ENCODE measurements at regions of chr13 and their contacts with region 1.

Region 1: GRCh38 chr13:99442273-99442895 is 58.9 kb upstream of the TM9SF2 start:
- DNase-seq: peak in 3 of 5 donors; percentile 37 to 63 (median 48)
- H3K4me3 ChIP-seq: no peak overlapping the region
- H3K27ac ChIP-seq: no peak overlapping the region
- H3K4me1 ChIP-seq: no peaks in the 10 kb centered on the region
- H3K27me3 ChIP-seq: no peaks in the 10 kb centered on the region
- CTCF ChIP-seq: peak; percentile 93

Region 2: GRCh38 chr13:99516153-99516929 is 74.0 kb after region 1 on chr13:
- intact Hi-C with region 1: loop called (anchors 10 kb)
- DNase-seq: no peak
- H3K4me3 ChIP-seq: no peak overlapping the region
- H3K27ac ChIP-seq: no peak overlapping the region
- H3K4me1 ChIP-seq: no peaks in the 10 kb centered on the region
- H3K27me3 ChIP-seq: no peaks in the 10 kb centered on the region
- CTCF ChIP-seq: no peak